Activated T-helper 2 cell treated with anti-CD3 and anti-CD28 coated beads, Interferon-gamma antibody, Interleukin-2, Interleukin-4, amounts not matched to agents 10 μg/mL and 5 μg/mL and 100 μg/mL, durations not matched to agents 14 hours and 24 hours and 36 hours (primary cell): ENCODE measurements at regions of chr2 and their contacts with region 1.

Region 1: DNA sequence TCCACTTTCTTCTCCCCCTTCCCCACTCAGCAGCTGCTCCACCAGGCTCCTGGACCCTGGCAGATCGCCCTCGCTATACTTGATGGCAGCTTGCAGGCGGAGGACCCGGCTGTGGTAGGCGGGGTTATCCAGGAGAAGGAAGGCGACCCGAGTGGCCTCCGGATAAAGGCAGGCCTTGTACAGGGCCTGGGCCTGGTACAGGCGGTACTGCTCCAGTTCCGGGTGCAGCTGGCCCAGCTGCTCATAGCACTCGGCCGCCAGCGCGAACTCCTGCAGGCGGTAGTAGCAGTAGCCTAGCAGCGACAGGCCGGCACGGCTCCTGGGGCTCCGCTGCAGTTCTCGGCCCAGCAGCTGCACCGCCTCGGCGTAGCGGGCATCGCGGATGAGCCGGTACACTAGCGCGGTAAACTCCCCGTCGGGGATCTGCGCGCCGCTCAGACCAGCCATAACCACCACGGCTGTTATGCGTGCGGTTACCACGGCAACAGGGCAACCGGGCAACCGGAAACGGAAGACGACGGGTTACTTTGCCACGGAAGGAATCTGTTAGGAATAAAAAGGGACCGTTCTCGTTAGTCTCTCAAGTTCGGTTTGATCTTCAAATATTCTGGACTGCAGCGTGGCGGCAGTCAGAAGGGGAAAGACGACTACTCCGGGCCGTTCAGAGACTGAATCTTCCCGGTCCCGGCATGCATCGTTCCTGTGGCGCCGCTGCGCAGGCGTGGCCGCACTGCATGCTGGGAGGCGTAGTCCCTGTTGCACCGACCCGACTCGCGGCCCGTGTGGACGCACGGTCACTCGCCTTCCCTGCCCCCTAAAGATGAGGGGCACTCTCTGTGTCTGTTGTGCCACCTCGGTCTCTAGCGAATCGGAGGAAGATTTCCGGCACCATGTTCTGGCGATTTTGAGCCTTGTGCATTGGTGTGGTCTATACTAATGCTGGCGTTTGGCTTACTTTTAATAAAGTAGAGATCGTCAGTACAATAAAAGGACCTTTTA is 226.0 kb downstream of the AGPS start:
- DNase-seq: peak; percentile 88
- H3K4me3 Mint-ChIP-seq: peak overlapping the region; percentile 92
- H3K27ac Mint-ChIP-seq: peak overlapping the region; percentile 97
- H3K4me1 Mint-ChIP-seq: peaks cover 4% of the 10 kb centered on the region
- H3K27me3 Mint-ChIP-seq: peaks cover 27% of the 10 kb centered on the region

Region 2: GRCh38 chr2:177392373-177393202 is 226.0 kb before region 1 on chr2 and contains the start of gene AGPS:
- intact Hi-C with region 1: loop called (anchors 5 kb)
- DNase-seq: peak; percentile 79
- H3K4me3 Mint-ChIP-seq: peak within 1 kb of the TSS; percentile 96
- H3K27ac Mint-ChIP-seq: peak within 1 kb of the TSS; percentile 94
- H3K4me1 Mint-ChIP-seq: peaks cover 63% of the 10 kb centered on the region
- H3K27me3 Mint-ChIP-seq: no peaks in the 10 kb centered on the region
- total RNA-seq, gene AGPS: 70.4 and 74.4 TPM in 2 replicates

Region 3: DNA sequence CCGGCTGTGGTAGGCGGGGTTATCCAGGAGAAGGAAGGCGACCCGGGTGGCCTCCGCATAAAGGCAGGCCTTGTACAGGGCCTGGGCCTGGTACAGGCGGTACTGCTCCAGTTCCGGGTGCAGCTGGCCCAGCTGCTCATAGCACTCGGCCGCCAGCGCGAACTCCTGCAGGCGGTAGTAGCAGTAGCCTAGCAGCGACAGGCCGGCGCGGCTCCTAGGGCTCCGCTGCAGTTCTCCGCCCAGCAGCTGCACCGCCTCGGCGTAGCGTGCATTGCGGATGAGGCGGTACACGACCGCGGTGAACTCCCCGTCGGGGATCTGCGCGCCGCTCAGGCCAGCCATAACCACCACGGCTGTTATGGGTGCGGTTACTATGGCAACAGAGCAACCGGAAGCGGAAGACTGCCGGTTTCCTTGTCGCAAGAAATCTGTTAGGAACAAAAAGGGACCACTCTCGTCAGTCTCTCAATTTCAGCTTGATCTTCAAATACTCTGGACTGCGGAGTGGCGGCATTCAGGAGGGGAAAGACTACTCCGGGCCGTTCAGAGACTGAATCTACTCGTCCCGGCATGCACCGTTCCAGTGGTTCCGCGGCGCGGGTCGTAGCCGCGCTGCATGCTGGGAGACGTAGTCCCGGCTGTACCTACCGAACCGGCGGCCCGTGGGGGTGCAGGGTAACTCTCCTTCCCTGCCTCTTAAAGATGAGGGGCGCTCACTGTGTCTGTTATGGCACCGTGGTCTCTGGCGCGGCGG is 66.0 kb before region 1 on chr2:
- intact Hi-C with region 1: loop called (anchors 1 kb)
- DNase-seq: peak; percentile 89
- H3K4me3 Mint-ChIP-seq: peak overlapping the region; percentile 91
- H3K27ac Mint-ChIP-seq: peak overlapping the region; percentile 97
- H3K4me1 Mint-ChIP-seq: peaks cover 12% of the 10 kb centered on the region
- H3K27me3 Mint-ChIP-seq: peaks cover 1% of the 10 kb centered on the region